Caco-2 (cell line): ENCODE measurements at regions of chr13 and their contacts with region 1.

Region 1: GRCh38 chr13:113208424-113209335 is at the start of gene PCID2:
- DNase-seq: peak; percentile 92 to 97
- H3K4me3 ChIP-seq: peak within 1 kb of the TSS; percentile 89
- H3K4me3 Mint-ChIP-seq: peak within 1 kb of the TSS; percentile 76
- H3K27ac Mint-ChIP-seq: peak within 1 kb of the TSS; percentile 37
- H3K4me1 ChIP-seq: peaks cover 4% of the 10 kb centered on the region; the same call in 1 of the 2 replicates
- H3K4me1 Mint-ChIP-seq: peaks cover 23% of the 10 kb centered on the region
- H3K27me3 ChIP-seq: no peaks in the 10 kb centered on the region
- H3K27me3 Mint-ChIP-seq: no peaks in the 10 kb centered on the region
- CTCF ChIP-seq: no peak
- total RNA-seq, gene PCID2: 79.5 and 81.5 TPM in 2 replicates

Region 2: DNA sequence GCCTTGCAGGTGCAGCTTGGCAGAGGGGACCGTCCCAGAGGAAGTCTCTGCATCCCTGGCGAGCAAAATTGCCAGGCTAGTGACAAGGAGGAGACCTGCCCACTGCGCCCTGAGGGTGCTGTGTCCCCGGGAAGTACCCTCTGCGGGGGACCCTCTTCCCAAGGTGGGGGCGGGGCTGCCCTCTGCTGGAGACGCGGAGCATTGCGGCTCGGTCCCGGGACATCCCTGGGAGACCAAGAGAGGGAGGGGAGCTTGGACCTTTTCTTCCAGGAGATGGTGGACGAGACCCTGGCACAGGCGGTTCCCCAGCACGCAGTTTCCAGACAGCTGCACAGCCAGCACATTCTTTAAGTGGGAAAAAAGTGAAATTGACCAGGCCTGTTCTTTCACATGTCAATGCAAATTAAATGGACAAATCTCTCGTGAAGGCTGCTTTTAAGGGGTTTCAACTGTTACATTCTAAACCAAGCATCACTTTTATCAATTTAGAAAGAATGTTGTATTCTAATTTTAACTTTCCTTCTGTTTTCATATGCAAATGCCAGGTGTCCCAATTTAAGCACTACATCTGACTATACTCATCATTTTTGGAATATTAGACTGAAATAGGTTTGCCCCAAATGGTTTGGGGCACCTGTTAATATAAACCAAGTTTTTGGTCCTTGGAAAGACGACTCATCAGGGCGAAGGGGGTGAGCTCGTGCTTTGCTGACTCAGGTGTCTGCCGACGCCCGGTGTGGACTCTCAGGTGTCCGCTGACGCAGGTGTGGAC is 179.0 kb before region 1 on chr13:
- CTCF ChIA-PET with region 1: no interaction called
- POLR2A ChIA-PET with region 1: no interaction called
- intact Hi-C with region 1: loop called (anchors 10 kb)
- DNase-seq: peak; percentile 74 to 87
- H3K4me3 ChIP-seq: no peak overlapping the region
- H3K4me3 Mint-ChIP-seq: no peak overlapping the region
- H3K27ac Mint-ChIP-seq: no peak overlapping the region
- H3K4me1 ChIP-seq: no peaks in the 10 kb centered on the region
- H3K4me1 Mint-ChIP-seq: peaks cover 11% of the 10 kb centered on the region
- H3K27me3 ChIP-seq: no peaks in the 10 kb centered on the region
- H3K27me3 Mint-ChIP-seq: no peaks in the 10 kb centered on the region
- CTCF ChIP-seq: peak; percentile 95 to 97

Region 3: GRCh38 chr13:113337556-113337955 is 128.9 kb after region 1 on chr13:
- CTCF ChIA-PET with region 1: no interaction called
- POLR2A ChIA-PET with region 1: interaction called, 14 read pairs
- intact Hi-C with region 1: no loop called
- DNase-seq: no peak
- H3K4me3 ChIP-seq: no peak overlapping the region
- H3K4me3 Mint-ChIP-seq: no peak overlapping the region
- H3K27ac Mint-ChIP-seq: no peak overlapping the region
- H3K4me1 ChIP-seq: no peaks in the 10 kb centered on the region
- H3K4me1 Mint-ChIP-seq: peaks cover under 1% of the 10 kb centered on the region
- H3K27me3 ChIP-seq: no peaks in the 10 kb centered on the region
- H3K27me3 Mint-ChIP-seq: no peaks in the 10 kb centered on the region
- CTCF ChIP-seq: no peak

Region 4: GRCh38 chr13:113584205-113584869 is 375.7 kb after region 1 on chr13 and contains the start of gene TFDP1:
- CTCF ChIA-PET with region 1: no interaction called
- POLR2A ChIA-PET with region 1: no interaction called
- intact Hi-C with region 1: no loop called
- DNase-seq: peak; percentile 94
- H3K4me3 ChIP-seq: peak within 1 kb of the TSS; percentile 77
- H3K4me3 Mint-ChIP-seq: peak within 1 kb of the TSS; percentile 94
- H3K27ac Mint-ChIP-seq: peak within 1 kb of the TSS; percentile 81
- H3K4me1 ChIP-seq: peaks cover 22% of the 10 kb centered on the region
- H3K4me1 Mint-ChIP-seq: peaks cover 19% of the 10 kb centered on the region
- H3K27me3 ChIP-seq: no peaks in the 10 kb centered on the region
- H3K27me3 Mint-ChIP-seq: no peaks in the 10 kb centered on the region
- CTCF ChIP-seq: no peak
- total RNA-seq, gene TFDP1: 136 and 140 TPM in 2 replicates

Region 5: GRCh38 chr13:113616991-113617749 is 408.5 kb after region 1 on chr13:
- CTCF ChIA-PET with region 1: no interaction called
- POLR2A ChIA-PET with region 1: no interaction called
- intact Hi-C with region 1: no loop called
- DNase-seq: no peak
- H3K4me3 ChIP-seq: no peak overlapping the region
- H3K4me3 Mint-ChIP-seq: no peak overlapping the region
- H3K27ac Mint-ChIP-seq: no peak overlapping the region
- H3K4me1 ChIP-seq: no peaks in the 10 kb centered on the region
- H3K4me1 Mint-ChIP-seq: no peaks in the 10 kb centered on the region
- H3K27me3 ChIP-seq: no peaks in the 10 kb centered on the region
- H3K27me3 Mint-ChIP-seq: no peaks in the 10 kb centered on the region
- CTCF ChIP-seq: no peak